Thyroid gland (tissue), 4 donors: ENCODE measurements at regions of chr7 and their contacts with region 1.

Region 1: DNA sequence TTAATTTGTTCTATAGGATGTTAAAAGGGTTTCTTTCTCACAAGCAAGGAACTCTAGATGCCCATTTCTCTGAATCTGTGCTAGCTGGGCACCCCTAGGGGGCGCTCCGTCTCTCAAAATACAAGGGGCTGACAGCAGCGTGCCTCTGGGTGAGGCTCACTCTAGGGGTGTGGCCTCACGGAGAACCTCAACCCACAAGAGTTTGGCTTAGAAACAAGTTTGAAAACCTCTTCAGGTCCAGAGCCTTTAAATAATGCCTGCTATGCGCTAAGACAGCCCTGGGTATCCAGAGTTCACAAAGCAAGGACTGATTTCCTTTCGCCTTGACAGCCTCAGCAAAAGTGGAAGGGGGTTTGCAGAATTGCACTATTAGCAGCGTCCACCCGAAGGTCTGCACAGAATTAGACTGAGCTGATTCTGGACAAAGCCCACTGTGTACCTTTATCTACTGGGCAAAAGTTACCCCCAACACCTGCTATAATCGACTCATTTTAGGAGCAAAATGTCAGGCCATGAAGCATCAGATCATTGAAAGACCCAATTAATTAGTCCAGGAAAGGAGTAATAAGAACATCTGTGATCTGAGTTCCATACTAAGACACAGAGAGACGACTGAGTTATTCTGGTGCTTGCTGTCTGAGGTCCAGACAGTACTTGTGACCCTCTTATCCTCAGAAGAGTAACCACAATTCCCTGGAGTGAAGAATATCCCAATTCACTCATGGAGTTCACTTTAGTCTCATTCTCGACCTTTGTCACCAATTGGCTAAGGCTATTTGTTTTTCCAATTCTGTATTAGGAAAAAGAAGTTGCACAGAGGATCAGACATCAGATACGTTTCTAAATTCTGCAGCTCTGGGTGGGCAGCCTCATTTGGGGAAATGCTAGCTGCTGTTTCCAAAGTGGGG is 574 bp upstream of the CPED1 start:
- DNase-seq: peak; percentile 89
- H3K4me3 ChIP-seq: peak overlapping the region; percentile 3 to 26 (median 22)
- H3K27ac ChIP-seq: peak overlapping the region; percentile 26 to 87 (median 74)
- H3K4me1 ChIP-seq: peaks cover 0 to 4% of the 10 kb centered on the region in 2 donors
- H3K27me3 ChIP-seq: no peaks in the 10 kb centered on the region
- CTCF ChIP-seq: peak; percentile 77 to 92 (median 84)
- POLR2A ChIP-seq: no peak

Region 2: DNA sequence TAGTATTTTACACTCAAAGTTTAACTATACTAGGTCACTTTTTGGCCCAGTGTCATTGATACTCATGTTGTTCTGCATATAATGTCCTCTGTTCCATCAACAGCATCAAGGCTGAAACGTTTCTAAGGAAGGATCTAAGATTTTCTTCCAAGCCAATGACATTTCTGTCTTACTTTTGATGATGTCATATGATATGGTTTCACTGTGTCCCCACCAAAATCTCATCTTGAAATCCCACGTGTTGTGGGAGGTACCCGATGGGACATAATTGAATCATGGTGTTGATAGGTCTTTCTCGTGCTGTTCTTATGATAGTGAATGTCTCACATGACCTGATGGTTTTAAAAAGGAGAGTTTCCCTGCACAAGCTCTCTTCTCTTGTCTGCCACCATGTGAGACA is 93.7 kb before region 1 on chr7:
- intact Hi-C with region 1: no loop called
- DNase-seq: no peak
- H3K4me3 ChIP-seq: no peak overlapping the region
- H3K27ac ChIP-seq: no peak overlapping the region
- H3K4me1 ChIP-seq: no peaks in the 10 kb centered on the region
- H3K27me3 ChIP-seq: no peaks in the 10 kb centered on the region
- CTCF ChIP-seq: no peak
- POLR2A ChIP-seq: no peak

Region 3: DNA sequence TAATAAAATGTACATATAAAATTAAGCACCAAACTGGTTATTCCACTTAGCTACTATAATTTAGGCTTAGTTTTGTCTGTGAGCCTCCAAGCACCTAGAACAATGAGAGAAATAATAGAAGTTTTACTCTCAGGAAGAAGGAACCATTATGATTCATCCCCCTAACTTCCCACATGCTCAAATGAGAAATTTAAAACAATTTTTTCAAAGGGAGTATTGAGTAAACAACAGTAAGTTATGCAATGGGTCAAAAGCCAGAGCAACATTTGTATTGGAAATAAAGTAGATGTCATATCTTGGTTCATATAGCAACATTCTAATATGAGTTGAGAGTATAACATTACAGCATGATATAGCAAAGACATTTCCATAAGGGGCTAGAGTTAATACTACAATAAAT is 32.7 kb after region 1 on chr7:
- intact Hi-C with region 1: no loop called
- DNase-seq: no peak
- H3K4me3 ChIP-seq: no peak overlapping the region
- H3K27ac ChIP-seq: peak overlapping the region in 1 of 3 donors; percentile 9
- H3K4me1 ChIP-seq: peaks cover 20 to 21% of the 10 kb centered on the region in 2 donors
- H3K27me3 ChIP-seq: no peaks in the 10 kb centered on the region
- CTCF ChIP-seq: no peak
- POLR2A ChIP-seq: no peak

Region 4: GRCh38 chr7:121081327-121081936 is 93.5 kb after region 1 on chr7:
- intact Hi-C with region 1: loop called (anchors 5 kb)
- DNase-seq: no peak
- H3K4me3 ChIP-seq: no peak overlapping the region
- H3K27ac ChIP-seq: no peak overlapping the region
- H3K4me1 ChIP-seq: no peaks in the 10 kb centered on the region
- H3K27me3 ChIP-seq: no peaks in the 10 kb centered on the region
- CTCF ChIP-seq: peak; percentile 18 to 79 (median 55)
- POLR2A ChIP-seq: no peak

Region 5: DNA sequence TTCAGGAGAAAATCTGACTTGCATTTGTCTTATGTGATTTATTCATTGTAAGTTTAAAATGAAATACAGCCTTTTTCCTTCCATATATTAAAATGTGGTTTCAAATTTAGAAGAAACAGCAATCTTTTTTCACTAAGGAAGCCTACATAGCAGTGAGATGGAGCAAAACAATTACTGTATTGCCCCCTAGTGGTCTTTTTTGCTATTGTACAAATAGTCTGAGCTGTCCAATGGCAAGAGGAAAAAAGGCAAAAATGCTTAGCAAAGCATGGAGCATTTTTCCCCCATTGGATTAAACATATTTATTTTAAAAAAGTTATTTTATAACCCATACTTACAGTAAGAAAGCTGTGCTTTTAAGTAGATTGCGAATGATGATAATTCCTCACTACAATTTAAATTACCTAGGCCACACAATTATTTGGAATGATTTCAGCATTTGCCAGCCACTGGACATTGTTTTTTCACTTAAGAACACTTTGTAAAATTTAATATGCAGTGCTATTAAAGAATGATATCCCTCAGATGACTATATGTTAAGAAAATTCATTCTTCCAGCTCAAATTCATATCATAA is 120.1 kb after region 1 on chr7:
- intact Hi-C with region 1: loop called (anchors 5 kb)
- DNase-seq: no peak
- H3K4me3 ChIP-seq: no peak overlapping the region
- H3K27ac ChIP-seq: no peak overlapping the region
- H3K4me1 ChIP-seq: peaks cover 0 to 1% of the 10 kb centered on the region in 2 donors
- H3K27me3 ChIP-seq: no peaks in the 10 kb centered on the region
- CTCF ChIP-seq: peak; percentile 47 to 73 (median 67)
- POLR2A ChIP-seq: no peak

Region 6: GRCh38 chr7:121204537-121204936 is 216.6 kb after region 1 on chr7:
- intact Hi-C with region 1: no loop called
- DNase-seq: no peak
- H3K4me3 ChIP-seq: no peak overlapping the region
- H3K27ac ChIP-seq: no peak overlapping the region
- H3K4me1 ChIP-seq: no peaks in the 10 kb centered on the region
- H3K27me3 ChIP-seq: no peaks in the 10 kb centered on the region
- CTCF ChIP-seq: no peak
- POLR2A ChIP-seq: no peak

Region 7: GRCh38 chr7:121605317-121605680 is 617.4 kb after region 1 on chr7:
- intact Hi-C with region 1: no loop called
- DNase-seq: no peak
- H3K4me3 ChIP-seq: no peak overlapping the region
- H3K27ac ChIP-seq: peak overlapping the region in 1 of 3 donors; percentile 34
- H3K4me1 ChIP-seq: peaks cover 3 to 14% of the 10 kb centered on the region in 2 donors
- H3K27me3 ChIP-seq: no peaks in the 10 kb centered on the region
- CTCF ChIP-seq: peak in 1 of 6 experiments; percentile 8
- POLR2A ChIP-seq: no peak